K562 (cell line): ENCODE measurements at regions of chr12 and their contacts with region 1.

Region 1: DNA sequence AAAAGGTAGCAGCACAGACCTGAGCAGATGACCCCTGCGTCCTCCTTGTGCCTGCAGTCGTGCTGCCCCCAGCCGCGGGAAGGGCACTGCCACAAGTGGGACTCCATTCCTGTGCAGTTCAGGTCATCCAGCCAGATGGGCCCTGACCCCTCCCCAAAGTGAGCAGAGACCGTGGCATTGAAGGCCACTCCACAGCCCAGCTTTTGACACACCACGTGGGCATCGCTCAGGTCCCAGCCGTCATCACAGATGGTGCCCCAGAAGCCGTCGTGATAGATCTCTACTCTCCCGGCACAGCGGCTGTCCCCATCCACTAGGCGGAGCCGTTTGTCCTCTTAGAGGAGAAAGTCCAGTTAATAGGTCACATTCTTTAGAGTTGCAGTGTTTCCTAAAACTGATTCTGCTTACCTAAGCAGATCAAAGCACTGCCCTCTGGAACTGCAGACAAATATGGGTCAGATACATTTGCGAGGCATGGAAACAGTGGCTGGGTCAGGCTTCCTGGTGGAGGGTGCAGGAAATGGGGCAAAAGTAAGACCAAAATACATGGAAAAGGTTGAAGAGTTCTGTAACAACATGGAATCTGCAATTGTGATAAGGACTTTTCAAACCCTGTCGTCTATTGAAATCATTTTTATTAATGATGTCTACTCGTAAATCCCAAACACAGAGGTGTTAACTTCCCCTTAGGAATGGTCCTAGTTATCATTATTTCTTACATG is 69.4 kb downstream of the CD163L1 start:
- DNase-seq: peak in 3 of 4 experiments; percentile 8 to 57 (median 37)
- ATAC-seq: peak; percentile 81
- H3K4me3 ChIP-seq: no peak overlapping the region
- H3K27ac ChIP-seq: no peak overlapping the region
- H3K4me1 ChIP-seq: peaks cover 0 to 4% of the 10 kb centered on the region in 2 experiments; a peak in 4 of 5 replicates
- H3K27me3 ChIP-seq: no peaks in the 10 kb centered on the region
- CTCF ChIP-seq: peak; percentile 62 to 73 (median 71)
- EP300 ChIP-seq: no peak
- POLR2A ChIP-seq: no peak
- RAD21 ChIP-seq: peak; percentile 43 to 68

Region 2: DNA sequence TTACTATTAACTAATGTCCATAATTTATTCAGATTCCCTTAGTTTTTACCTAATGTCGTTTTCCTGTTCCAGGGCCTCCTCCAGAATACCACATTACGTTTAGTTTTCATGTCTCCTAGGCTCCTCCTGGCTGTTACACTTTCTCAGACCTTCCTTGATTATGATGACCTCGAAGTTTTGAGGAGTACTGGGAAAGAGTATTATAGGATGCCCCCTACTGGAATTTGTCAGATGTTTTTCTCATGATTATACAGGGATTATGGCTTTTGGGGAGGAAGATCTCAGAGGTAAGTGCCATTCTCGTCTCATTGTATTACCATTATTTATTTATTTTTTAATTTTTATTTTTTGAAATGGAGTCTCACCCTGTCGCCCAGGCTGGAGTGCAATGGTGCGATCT is 331.7 kb before region 1 on chr12:
- CTCF ChIA-PET with region 1: no interaction called
- POLR2A ChIA-PET with region 1: no interaction called
- in situ Hi-C with region 1: no loop called
- intact Hi-C with region 1: no loop called
- DNase-seq: peak; percentile 22 to 64 (median 40)
- ATAC-seq: peak; percentile 87
- H3K4me3 ChIP-seq: no peak overlapping the region
- H3K27ac ChIP-seq: no peak overlapping the region
- H3K4me1 ChIP-seq: no peaks in the 10 kb centered on the region; a peak in 1 of 5 replicates
- H3K27me3 ChIP-seq: no peaks in the 10 kb centered on the region
- CTCF ChIP-seq: peak; percentile 54 to 75 (median 59); a peak in 5 of 6 replicates
- EP300 ChIP-seq: no peak
- POLR2A ChIP-seq: no peak
- RAD21 ChIP-seq: peak; percentile 72 to 77

Region 3: GRCh38 chr12:7439579-7440505 is 65.3 kb after region 1 on chr12:
- CTCF ChIA-PET with region 1: no interaction called
- POLR2A ChIA-PET with region 1: no interaction called
- in situ Hi-C with region 1: loop called (anchors 10 kb)
- intact Hi-C with region 1: no loop called
- DNase-seq: peak; percentile 69 to 83 (median 73)
- ATAC-seq: peak; percentile 96
- H3K4me3 ChIP-seq: peak overlapping the region; percentile 49
- H3K27ac ChIP-seq: peak overlapping the region; percentile 75
- H3K4me1 ChIP-seq: peaks cover 0 to 4% of the 10 kb centered on the region in 2 experiments; a peak in 1 of 5 replicates
- H3K27me3 ChIP-seq: no peaks in the 10 kb centered on the region
- CTCF ChIP-seq: peak in 2 of 3 experiments; percentile 23 to 47; a peak in 2 of 6 replicates
- EP300 ChIP-seq: no peak
- POLR2A ChIP-seq: peak; percentile 75
- RAD21 ChIP-seq: peak; percentile 8 to 23; a peak in 1 of 4 replicates

Region 4: DNA sequence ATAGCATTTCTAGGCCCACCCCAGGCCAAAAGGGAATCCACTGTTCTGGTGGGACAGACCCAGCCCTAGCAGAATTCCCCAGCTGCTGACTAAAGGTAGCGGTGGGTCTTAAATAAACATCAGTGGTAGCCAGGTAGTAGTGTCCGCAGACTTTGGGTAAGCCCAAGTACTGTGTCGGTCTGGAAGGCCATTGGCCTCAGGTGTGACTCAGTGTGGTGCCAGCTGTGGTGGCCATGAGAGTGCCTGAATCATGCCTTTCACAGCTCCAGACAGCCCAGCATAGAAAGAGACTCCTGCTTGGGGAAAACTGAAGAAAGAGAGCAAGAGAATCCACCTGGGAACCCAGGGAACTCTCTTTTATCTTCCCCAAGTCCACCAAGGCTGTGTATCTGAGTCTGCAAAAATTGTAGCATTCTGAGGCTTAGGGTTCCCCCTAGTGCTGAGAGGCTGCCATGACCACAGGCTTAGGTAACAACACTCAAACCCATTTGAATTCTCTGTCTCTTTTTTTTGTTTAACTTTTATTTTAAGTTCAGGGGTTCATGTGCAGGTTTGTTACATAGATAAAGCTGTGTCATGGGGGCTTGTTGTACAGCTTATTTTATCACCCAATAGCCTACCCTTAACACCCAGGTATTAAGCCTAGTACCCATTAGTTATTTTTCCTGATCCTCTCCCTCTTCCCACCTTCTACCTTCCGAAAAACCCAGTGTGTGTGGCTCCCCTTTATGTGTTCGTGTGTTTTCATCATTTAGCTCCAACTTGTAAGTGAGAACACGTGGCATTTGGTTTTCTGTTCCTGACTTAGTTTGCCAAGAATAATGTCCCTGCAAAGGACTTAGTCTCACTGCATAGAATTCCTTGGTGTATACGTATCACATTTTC is 86.0 kb after region 1 on chr12:
- CTCF ChIA-PET with region 1: no interaction called
- POLR2A ChIA-PET with region 1: no interaction called
- in situ Hi-C with region 1: no loop called
- intact Hi-C with region 1: loop called (anchors 2 kb)
- DNase-seq: peak; percentile 48 to 66 (median 53)
- ATAC-seq: peak; percentile 92
- H3K4me3 ChIP-seq: no peak overlapping the region
- H3K27ac ChIP-seq: no peak overlapping the region
- H3K4me1 ChIP-seq: no peaks in the 10 kb centered on the region
- H3K27me3 ChIP-seq: no peaks in the 10 kb centered on the region; a peak in 1 of 5 replicates
- CTCF ChIP-seq: peak; percentile 72 to 91 (median 73); a peak in 5 of 6 replicates
- EP300 ChIP-seq: no peak
- POLR2A ChIP-seq: no peak
- RAD21 ChIP-seq: peak; percentile 90 to 96

Region 5: GRCh38 chr12:7668171-7668570 is 293.6 kb after region 1 on chr12:
- CTCF ChIA-PET with region 1: no interaction called
- POLR2A ChIA-PET with region 1: no interaction called
- in situ Hi-C with region 1: no loop called
- intact Hi-C with region 1: no loop called
- DNase-seq: no peak
- ATAC-seq: no peak
- H3K4me3 ChIP-seq: no peak overlapping the region
- H3K27ac ChIP-seq: no peak overlapping the region
- H3K4me1 ChIP-seq: no peaks in the 10 kb centered on the region
- H3K27me3 ChIP-seq: no peaks in the 10 kb centered on the region; a peak in 1 of 5 replicates
- CTCF ChIP-seq: no peak
- EP300 ChIP-seq: no peak
- POLR2A ChIP-seq: no peak
- RAD21 ChIP-seq: no peak